ENCODE measurements at regions of chr10 and their contacts with region 1.

Region 1: GRCh38 chr10:30591249-30591670 is 38.3 kb downstream of the LYZL2 start:
- DNase-seq: no peak
- H3K4me3 ChIP-seq: no peak overlapping the region
- H3K27ac ChIP-seq: no peak overlapping the region
- H3K4me1 ChIP-seq: peaks cover 0 to 6% (median 4%) of the 10 kb centered on the region in 4 donors
- H3K27me3 ChIP-seq: no peaks in the 10 kb centered on the region
- CTCF ChIP-seq: peak; percentile 75 to 90 (median 75)
- EP300 ChIP-seq: no peak
- POLR2A ChIP-seq: no peak

Region 2: DNA sequence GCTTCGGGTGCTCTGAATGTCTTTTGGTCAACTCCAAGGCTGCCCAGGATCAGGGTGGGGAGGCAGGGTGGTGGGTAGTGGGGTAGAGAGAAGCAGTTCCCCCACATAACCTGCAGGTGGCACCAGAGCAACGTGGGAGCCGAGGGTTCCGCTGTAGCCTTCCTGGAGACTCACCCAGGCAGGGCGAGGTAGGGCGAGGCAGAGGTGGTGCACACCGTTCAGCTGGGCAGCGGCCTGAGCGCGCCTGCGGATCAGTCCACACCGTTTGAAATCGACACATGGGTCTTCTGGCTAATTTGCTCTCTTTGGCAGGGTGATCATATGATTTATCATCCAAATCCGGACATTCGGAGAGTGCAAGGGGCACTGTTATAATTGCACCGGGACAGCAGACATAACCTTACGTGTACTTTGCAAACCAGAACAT is 198.7 kb before region 1 on chr10:
- intact Hi-C with region 1: loop called (anchors 1 kb)
- DNase-seq: no peak
- H3K4me3 ChIP-seq: peak overlapping the region in 2 of 4 donors; percentile 28 to 45
- H3K27ac ChIP-seq: no peak overlapping the region
- H3K4me1 ChIP-seq: peaks cover 5 to 15% (median 10%) of the 10 kb centered on the region in 4 donors
- H3K27me3 ChIP-seq: no peaks in the 10 kb centered on the region
- CTCF ChIP-seq: peak; percentile 89 to 100 (median 92)
- EP300 ChIP-seq: no peak
- POLR2A ChIP-seq: no peak

Region 3: GRCh38 chr10:30413996-30414576 is 177.2 kb before region 1 on chr10:
- intact Hi-C with region 1: loop called (anchors 5 kb)
- DNase-seq: no peak
- H3K4me3 ChIP-seq: no peak overlapping the region
- H3K27ac ChIP-seq: no peak overlapping the region
- H3K4me1 ChIP-seq: peaks cover 0 to 7% (median 2%) of the 10 kb centered on the region in 4 donors
- H3K27me3 ChIP-seq: no peaks in the 10 kb centered on the region
- CTCF ChIP-seq: peak; percentile 77 to 90 (median 79)
- EP300 ChIP-seq: no peak
- POLR2A ChIP-seq: no peak

Region 4: DNA sequence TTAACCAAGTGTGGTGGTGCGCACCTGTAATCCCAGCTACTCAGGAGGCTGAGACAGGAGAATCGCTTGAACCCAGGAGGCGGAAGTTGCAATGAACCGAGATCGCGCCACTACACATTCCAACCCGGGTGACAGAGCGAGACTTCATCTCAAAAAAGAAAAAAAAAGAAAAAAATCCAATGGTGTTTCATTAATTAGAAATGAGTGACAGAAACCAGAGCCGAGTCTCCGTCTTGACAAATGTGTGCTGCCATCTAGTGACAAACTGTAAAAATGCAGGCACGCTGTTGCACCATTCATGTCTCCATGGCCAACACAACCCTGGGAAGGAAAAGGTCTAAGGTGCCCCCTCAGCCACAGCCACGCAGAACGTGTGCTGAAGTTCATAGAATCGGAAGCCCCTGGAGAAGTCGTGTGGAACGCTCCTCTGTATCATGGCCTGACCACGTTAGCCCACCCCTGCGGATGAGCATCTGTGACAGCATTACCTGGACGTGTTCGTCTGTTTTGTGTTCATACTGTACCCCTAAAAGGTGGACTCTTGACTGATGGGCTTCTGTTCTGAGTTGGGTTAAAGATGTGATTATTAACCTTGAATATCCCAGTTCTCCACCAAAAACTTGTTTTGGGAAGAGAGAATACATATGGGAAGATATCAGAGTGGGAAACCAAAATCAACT is 56.7 kb before region 1 on chr10:
- intact Hi-C with region 1: loop called (anchors 5 kb)
- DNase-seq: peak; percentile 97
- H3K4me3 ChIP-seq: no peak overlapping the region
- H3K27ac ChIP-seq: no peak overlapping the region
- H3K4me1 ChIP-seq: peaks cover 5 to 29% (median 17%) of the 10 kb centered on the region in 4 donors
- H3K27me3 ChIP-seq: no peaks in the 10 kb centered on the region
- CTCF ChIP-seq: peak; percentile 91 to 93 (median 93)
- EP300 ChIP-seq: no peak
- POLR2A ChIP-seq: no peak